HEK293 (cell line): ENCODE measurements at regions of chr20 and their contacts with region 1.

Region 1: DNA sequence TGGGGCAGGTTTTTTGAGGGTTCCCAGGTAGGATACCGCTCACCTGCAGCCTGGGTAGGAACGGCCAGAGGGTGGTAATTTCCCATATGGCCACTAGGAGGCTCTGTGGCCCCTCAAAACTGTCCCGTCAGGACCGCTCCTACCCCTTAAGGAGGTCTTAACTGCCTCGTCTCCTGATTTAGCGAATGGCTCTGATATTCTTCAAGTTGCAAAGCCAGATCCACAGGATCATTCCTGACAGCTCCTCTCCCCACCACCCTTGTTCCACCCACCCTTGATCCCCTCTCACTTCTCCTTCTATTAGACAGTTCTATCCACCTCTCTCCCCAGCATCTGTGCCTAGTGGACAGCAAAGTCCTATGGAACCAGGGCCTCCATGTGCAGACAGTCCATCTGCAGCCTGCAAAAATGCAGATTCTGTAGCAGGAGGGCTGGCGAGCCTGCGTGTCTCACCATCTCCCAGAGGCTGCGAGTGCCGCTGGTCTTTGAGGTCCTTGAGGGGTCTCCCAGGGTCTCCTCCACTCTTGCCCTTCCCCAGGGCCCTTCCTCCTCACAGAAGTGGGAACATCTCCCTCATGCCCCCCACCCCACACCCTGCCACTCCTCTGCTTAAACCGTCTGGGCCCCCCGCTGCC is 34.3 kb upstream of the ZBP1 start:
- H3K4me3 ChIP-seq: no peak overlapping the region
- H3K27ac ChIP-seq: no peak overlapping the region
- H3K4me1 ChIP-seq: no peaks in the 10 kb centered on the region
- CTCF ChIP-seq: peak; percentile 85

Region 2: GRCh38 chr20:58087193-58087858 is 432.8 kb after region 1 on chr20:
- CTCF ChIA-PET with region 1: interaction called, 24 read pairs
- POLR2A ChIA-PET with region 1: no interaction called
- H3K4me3 ChIP-seq: no peak overlapping the region
- H3K27ac ChIP-seq: no peak overlapping the region
- H3K4me1 ChIP-seq: no peaks in the 10 kb centered on the region
- CTCF ChIP-seq: no peak